SK-N-SH (cell line): ENCODE measurements at regions of chr17 and their contacts with region 1.

Region 1: GRCh38 chr17:57541472-57542394 is 203.4 kb downstream of the CCDC182 start:
- DNase-seq: peak; percentile 76
- H3K4me3 ChIP-seq: peak overlapping the region in 1 of 2 experiments; percentile 10; a peak in 1 of 4 replicates
- H3K27ac ChIP-seq: peak overlapping the region; percentile 65 to 100
- H3K4me1 ChIP-seq: peaks cover 52 to 98% of the 10 kb centered on the region in 2 experiments
- H3K27me3 ChIP-seq: no peaks in the 10 kb centered on the region
- CTCF ChIP-seq: no peak
- EP300 ChIP-seq: peak; percentile 71 to 97; a peak in 3 of 4 replicates
- RAD21 ChIP-seq: peak; percentile 54

Region 2: DNA sequence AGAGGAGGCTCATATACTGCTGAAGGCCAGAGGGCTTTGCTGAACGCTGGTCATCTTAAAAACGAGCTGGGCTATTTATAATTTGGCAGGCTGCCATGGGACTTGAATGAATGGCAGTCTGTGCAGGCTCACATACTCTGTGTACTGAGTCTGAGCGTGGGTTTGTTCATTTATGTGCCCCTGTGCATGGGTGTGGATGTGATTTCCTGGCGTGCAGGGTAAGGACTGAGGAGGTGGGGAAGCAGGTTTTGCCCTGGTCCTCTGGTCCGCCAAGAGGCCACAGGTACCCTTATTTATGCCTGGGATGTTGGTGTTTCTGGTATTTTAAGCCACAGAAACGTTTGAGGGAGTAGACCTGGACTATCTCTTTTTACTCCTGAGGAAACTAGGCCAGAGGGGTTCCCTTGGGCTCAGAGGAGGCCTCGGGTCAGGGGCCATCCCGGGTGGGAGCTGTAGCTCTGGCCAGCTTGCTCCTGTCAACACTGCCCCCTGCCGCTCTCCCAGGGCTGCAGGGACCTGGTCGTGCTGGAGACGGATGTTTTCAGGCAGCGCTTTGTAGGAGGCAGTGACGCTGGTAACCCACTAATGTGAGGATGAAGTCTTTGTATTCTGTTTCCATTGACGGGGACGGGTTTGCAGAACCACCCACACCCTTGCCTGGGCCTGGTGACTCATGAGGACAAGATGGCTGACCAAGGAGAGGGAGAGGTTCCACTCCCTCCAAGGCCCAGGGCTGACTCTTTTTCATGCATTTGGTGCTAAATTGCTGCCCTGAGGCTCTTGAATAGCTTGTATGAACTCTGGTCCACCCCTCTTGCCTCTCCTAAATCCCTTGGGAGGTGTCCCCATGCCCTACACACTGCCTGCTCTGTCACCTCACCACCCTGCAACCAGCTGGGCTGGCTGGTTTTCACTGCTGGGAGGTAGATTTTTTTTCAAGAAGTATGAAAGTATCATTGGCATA is 100.9 kb before region 1 on chr17:
- CTCF ChIA-PET with region 1: interaction called, 18 read pairs
- POLR2A ChIA-PET with region 1: interaction called, 9 read pairs
- DNase-seq: peak; percentile 82
- H3K4me3 ChIP-seq: no peak overlapping the region
- H3K27ac ChIP-seq: peak overlapping the region; percentile 70 to 96
- H3K4me1 ChIP-seq: peaks cover 47 to 86% of the 10 kb centered on the region in 2 experiments
- H3K27me3 ChIP-seq: no peaks in the 10 kb centered on the region
- CTCF ChIP-seq: peak; percentile 53
- EP300 ChIP-seq: peak in 1 of 2 experiments; percentile 60; a peak in 1 of 4 replicates
- RAD21 ChIP-seq: peak; percentile 68

Region 3: DNA sequence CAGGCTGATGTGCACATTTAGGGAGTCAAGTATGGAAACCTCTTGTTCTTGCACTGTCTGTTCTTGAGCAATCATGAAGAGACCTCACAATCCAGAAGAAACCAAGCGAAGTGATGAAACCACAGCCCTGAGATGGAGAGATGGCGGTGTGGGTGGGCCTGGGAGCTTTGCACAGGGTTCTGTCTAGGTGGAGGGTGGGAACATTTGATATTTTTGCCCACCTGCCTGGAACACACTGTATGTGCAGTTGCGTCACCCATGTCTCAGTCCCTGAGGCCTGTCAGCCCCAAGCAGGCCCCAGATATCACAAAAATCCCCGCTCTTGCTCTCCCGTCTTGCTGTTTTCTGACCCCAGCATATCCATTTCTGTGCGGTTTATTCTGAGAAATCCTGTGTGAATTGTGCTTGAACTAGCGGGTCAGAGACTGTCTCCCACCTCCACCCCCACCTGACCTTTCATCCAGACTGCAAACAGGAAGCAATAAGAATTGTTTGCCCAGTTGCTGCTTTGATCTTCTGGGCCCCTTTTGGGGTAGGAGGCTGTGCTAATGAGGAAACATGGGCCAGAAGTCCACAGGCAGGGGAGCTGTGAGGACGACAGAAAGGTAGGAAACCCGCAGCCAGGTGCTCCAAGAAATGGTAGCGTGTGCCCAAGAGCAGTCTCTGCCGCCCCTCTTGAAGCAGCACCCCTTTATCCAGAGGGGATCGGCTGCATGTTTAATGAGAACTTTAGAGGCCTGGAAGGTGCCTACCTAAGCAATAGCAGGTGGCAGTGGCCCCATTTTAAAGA is 19.5 kb after region 1 on chr17:
- CTCF ChIA-PET with region 1: interaction called, 62 read pairs
- POLR2A ChIA-PET with region 1: interaction called, 11 read pairs
- DNase-seq: no peak
- H3K4me3 ChIP-seq: no peak overlapping the region
- H3K27ac ChIP-seq: peak overlapping the region in 1 of 2 experiments; percentile 99; a peak in 2 of 4 replicates
- H3K4me1 ChIP-seq: peaks cover 10 to 94% of the 10 kb centered on the region in 2 experiments; a peak in 3 of 4 replicates
- H3K27me3 ChIP-seq: no peaks in the 10 kb centered on the region
- CTCF ChIP-seq: no peak
- EP300 ChIP-seq: no peak
- RAD21 ChIP-seq: no peak

Region 4: DNA sequence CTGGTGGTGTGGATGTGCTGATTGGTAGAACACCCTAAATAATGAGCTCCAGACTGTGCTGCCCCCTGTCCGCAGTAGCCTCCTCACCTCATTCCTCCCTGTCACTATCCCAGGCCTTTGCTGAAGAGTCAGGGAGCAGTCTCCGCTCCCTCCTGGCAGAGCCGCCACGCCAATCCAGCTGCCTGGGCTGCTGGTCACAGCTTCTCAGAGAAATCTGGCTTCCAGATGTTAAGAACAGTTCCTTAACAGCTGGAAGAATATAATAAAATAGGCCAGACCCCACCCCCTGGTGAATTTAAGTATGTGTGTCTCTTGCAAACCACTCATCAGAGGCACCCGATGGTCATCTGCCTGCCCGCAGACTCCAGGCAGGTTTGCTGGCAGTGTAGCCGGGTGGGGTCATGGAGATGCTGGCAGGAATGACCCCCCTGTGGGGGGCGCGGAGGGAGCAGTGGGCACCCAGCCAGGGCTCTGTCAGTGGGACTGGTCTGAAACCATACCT is 42.4 kb after region 1 on chr17:
- CTCF ChIA-PET with region 1: interaction called, 19 read pairs
- POLR2A ChIA-PET with region 1: interaction called, 51 read pairs
- DNase-seq: peak; percentile 83
- H3K4me3 ChIP-seq: no peak overlapping the region
- H3K27ac ChIP-seq: peak overlapping the region in 1 of 2 experiments; percentile 100; a peak in 2 of 4 replicates
- H3K4me1 ChIP-seq: peaks cover 13 to 89% of the 10 kb centered on the region in 2 experiments; a peak in 3 of 4 replicates
- H3K27me3 ChIP-seq: no peaks in the 10 kb centered on the region
- CTCF ChIP-seq: no peak
- EP300 ChIP-seq: peak in 1 of 2 experiments; percentile 86; a peak in 1 of 4 replicates
- RAD21 ChIP-seq: peak; percentile 47; the same call in 1 of the 2 replicates